ENCODE measurements at regions of chr7 and their contacts with region 1.

Region 1: DNA sequence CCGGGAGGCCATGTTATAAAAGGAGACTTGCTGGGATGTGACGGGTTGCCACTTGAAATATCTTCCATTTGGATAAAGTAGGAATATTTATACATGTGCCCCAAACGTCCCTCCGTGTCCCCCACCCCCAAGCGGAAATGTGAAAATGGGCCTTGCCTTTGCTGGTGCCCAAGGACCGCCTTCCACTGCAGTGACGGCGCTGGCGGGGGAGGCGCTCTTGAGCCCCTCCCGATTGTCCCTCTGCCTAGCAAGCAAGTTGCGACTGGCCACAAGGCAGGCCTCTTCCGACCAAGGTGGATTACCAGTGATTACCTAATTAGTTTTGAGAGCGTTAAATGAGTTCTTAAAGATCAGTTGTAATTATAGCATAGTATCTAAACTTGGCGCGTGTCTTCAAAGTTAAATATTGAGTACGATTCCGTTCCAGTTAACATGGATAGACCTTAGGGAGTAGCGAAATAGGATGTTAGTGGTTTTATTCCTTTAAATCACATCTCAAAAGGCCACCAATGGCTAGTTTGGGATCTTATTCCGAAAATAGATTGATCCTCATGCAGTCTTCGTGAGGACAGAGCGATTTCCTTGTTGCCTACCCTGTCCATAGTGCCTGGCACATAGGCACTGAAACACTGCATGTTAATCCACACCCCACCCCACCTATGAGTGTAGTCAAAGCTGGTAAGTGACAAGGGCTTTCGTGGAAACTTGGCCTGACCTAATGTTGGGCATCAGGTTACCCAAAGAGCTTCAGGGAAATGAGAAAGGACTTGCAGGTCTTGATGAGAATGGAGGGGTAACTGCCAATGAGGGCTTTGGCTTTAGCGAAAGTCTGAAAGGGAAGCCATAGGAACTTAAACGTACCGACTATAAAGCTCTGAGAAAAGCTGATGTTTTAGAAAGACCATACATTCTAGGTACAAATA is 1.1 kb downstream of the PPIA start:
- DNase-seq: peak; percentile 81
- H3K4me3 Mint-ChIP-seq: peak overlapping the region; percentile 94
- H3K27ac Mint-ChIP-seq: peak overlapping the region; percentile 94
- H3K4me1 Mint-ChIP-seq: peaks cover 34% of the 10 kb centered on the region
- H3K27me3 Mint-ChIP-seq: no peaks in the 10 kb centered on the region

Region 2: DNA sequence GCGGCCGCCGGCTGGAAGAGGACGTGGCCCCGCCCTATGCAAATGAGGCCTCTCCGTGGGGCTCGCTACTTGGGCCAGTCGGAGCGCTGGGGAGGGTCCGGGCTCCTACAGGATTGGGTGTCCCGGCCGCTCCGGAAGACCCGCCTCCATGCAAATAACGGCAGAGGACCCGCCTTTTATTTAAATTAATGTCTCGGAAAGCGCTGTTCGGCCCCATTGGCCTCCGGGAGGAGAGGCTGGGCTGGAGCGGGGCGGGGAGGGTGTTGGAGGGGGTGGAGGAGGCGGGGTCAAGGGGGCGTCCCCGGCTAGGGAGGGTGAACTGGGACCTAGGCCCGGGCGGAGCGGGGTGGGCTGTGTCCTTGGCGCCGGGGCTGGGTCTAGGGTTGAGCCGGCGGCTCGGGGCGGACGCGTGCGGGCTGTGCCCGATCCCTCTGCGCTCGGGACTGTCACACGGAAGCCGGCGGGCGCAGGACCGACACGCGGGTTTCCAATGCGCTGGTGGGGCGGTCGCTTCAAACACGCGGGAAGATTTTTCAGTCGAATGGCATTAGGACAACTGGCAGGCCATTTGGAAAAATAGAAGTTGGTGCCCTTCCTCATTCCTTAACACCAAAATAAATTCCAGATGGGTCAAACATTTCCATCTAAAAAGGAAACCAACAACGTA is 714.9 kb before region 1 on chr7:
- intact Hi-C with region 1: loop called (anchors 1 kb)
- DNase-seq: peak; percentile 97
- H3K4me3 Mint-ChIP-seq: peak overlapping the region; percentile 90
- H3K27ac Mint-ChIP-seq: peak overlapping the region; percentile 84
- H3K4me1 Mint-ChIP-seq: peaks cover 28% of the 10 kb centered on the region
- H3K27me3 Mint-ChIP-seq: no peaks in the 10 kb centered on the region

Region 3: DNA sequence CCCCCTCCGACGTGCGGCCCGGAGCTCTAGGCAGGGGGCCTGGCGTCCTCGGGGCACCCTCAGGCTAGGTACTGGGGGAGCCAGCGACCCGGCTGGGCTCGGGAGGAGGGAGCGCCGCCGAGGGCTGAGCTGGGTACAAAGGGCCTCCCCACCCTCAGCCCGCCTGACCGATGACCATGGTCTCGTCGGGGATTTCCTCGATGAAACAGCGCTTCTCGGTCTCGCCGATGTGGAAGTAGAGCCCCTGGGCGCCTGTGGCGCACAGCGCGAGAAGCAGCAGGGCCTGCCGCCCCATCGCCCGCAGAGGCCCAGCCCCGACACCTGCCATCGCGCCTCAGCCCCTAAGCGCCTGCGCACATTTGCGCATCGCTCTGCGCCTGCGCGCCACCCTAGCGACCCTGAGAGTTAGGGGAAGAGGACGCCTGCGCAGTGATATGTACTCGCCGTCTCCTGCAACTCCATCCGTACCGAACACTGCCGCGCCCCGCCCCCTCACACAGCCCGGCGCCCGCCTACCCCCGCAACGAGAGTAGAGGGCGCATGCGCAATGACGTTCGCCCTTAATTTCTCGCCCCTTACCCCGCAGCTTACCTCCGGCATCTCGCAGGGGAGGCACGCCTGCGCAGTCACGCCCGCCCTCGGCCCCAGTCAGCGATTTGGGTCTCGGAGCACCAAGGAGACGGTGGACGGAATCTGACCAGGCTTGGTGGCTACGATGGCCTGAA is 215.5 kb before region 1 on chr7 and contains the start of gene TMED4:
- intact Hi-C with region 1: loop called (anchors 1 kb)
- DNase-seq: peak; percentile 100
- H3K4me3 Mint-ChIP-seq: peak within 1 kb of the TSS; percentile 93
- H3K27ac Mint-ChIP-seq: peak within 1 kb of the TSS; percentile 93
- H3K4me1 Mint-ChIP-seq: peaks cover 33% of the 10 kb centered on the region
- H3K27me3 Mint-ChIP-seq: no peaks in the 10 kb centered on the region
- total RNA-seq, gene TMED4: 74.9 and 79.6 TPM in 2 replicates

Region 4: DNA sequence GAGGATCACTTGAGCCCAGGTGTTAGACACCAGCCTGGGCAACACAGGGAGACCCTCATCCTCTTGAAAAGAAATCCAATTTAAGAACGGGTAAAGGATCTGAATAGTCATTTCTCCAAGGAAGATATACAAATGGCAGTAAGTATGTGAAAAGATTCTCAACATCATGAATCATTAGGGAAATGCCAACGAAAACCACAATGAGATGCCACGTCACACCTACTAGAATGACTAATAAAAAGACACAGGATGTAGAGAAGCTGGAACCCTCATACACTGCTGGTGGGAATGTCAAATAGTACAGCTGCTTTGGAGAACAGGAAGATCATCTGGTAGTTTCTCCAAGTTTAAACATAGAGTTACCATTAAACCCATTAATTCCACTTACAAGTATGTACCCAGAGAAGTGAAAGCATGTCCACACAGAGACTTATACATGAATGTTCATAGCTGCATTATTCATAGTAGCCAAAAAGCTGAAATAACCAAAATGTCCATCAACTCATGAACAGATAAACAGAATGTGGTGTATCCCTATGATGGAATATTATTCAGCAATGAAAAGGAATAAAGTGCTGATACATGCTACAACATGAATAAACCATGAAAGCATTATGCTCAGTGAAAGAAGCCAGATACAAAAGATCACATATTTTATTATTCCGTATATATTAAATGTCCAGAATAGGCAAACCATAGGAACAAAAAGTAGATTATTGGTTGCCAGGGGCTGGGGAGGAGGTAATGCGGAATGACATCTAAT is 62.0 kb before region 1 on chr7:
- intact Hi-C with region 1: loop called (anchors 1 kb)
- DNase-seq: peak; percentile 42
- H3K4me3 Mint-ChIP-seq: peak overlapping the region; percentile 50
- H3K27ac Mint-ChIP-seq: peak overlapping the region; percentile 89
- H3K4me1 Mint-ChIP-seq: peaks cover 29% of the 10 kb centered on the region
- H3K27me3 Mint-ChIP-seq: peaks cover 2% of the 10 kb centered on the region

Region 5: DNA sequence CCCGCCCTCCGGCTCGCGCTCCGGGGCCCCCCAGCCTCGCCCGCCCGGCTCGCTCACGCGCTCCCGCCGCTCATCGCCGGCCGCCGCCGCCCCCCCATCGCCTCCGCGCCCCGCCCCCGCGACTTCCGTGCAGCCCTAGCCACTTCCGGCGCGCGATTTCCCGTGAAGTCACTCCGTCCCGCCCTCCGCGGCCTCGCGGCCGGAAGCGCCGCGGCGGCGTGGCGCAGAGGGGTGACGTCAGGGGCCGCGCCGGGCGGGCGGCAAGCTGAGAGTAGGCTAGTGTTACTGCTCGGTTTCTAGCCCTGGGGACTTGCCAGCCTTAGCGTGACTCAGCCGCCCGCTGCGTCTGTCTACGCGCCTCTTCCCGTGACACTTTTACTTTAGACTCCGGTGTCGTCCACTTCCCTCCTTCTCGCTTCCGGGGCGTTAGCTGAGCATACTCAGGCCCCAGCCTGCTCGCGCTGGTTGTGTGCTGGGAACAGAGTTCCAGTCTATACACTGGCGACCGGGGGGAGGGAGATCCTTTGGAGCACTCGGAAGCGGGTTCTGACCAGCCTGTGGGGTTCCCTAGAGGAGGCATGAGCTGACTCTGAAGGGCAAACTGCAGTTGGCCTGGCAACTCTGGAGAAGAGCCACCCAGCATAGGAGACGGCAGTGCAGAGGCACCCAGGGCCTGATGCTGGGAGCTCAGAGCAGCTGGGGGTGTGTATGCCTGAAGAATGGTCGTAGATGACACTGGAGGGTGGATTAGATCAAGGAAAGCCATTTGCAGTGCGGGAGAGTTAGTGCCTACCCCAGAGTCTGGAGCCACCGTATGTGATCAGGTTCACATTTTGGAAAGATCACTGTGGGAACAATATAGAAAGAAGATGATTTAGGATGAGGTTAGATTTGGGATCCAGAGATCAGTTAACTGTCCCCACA is 88.1 kb after region 1 on chr7 and contains the start of gene PURB:
- intact Hi-C with region 1: loop called (anchors 1 kb)
- DNase-seq: peak; percentile 97
- H3K4me3 Mint-ChIP-seq: peak within 1 kb of the TSS; percentile 98
- H3K27ac Mint-ChIP-seq: peak within 1 kb of the TSS; percentile 100
- H3K4me1 Mint-ChIP-seq: peaks cover 67% of the 10 kb centered on the region
- H3K27me3 Mint-ChIP-seq: no peaks in the 10 kb centered on the region
- total RNA-seq, gene PURB: 42.1 and 42.6 TPM in 2 replicates

Region 6: DNA sequence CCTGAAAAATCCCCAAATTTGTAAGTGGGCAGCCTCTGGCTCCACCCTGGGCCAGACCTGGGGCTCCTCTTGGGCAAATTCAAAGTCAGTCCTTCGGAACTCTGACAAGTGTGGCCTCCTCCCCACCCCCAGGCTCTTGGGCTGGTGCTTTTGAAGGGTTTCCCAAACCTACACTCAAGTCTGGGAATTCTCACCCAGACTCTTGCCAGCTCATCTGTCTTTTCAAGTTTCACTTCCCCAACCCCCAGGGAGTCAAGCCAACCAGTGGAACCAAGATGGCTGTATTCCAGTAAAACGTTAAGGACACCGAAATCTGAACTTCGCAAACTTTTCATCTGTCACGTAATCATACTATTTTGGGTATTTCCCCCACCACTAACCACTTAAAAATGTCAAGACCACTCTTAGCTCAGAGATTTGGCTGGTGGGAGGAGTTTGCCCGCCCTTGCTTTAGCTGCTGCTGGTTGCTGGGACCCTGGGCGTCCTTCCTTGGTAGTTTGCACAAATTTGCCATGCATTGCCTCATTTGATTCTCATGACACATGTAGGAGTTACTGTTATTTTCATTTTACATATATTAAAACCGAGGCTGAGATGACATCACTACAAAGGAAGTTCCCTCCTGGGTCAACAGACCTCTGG is 182.9 kb after region 1 on chr7:
- intact Hi-C with region 1: loop called (anchors 2 kb)
- DNase-seq: peak; percentile 56
- H3K4me3 Mint-ChIP-seq: peak overlapping the region; percentile 98
- H3K27ac Mint-ChIP-seq: peak overlapping the region; percentile 98
- H3K4me1 Mint-ChIP-seq: peaks cover 78% of the 10 kb centered on the region
- H3K27me3 Mint-ChIP-seq: no peaks in the 10 kb centered on the region

Region 7: GRCh38 chr7:45224832-45225231 is 427.2 kb after region 1 on chr7:
- intact Hi-C with region 1: no loop called
- DNase-seq: no peak
- H3K4me3 Mint-ChIP-seq: no peak overlapping the region
- H3K27ac Mint-ChIP-seq: no peak overlapping the region
- H3K4me1 Mint-ChIP-seq: no peaks in the 10 kb centered on the region
- H3K27me3 Mint-ChIP-seq: peaks cover 22% of the 10 kb centered on the region

Region 8: DNA sequence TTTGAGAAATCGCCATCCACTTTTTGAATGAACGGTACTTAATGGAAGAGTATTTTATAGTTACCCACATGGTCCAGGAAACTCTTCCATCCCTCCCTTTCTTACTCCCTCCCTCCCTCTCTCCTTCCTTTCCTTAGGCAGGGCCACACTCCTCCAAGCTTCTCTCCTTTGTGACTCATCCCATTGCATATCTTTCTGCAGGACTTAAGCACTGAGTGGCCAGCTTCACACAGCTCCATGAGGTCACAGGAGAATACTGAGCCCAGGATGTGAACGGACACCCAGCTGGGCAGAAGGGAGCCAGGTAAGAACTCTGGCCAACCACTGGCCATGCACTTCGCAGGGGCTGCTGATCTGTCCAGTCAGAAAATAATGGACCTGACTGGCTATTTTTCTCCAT is 586.9 kb after region 1 on chr7:
- intact Hi-C with region 1: no loop called
- DNase-seq: no peak
- H3K4me3 Mint-ChIP-seq: no peak overlapping the region
- H3K27ac Mint-ChIP-seq: no peak overlapping the region
- H3K4me1 Mint-ChIP-seq: no peaks in the 10 kb centered on the region
- H3K27me3 Mint-ChIP-seq: peaks cover 2% of the 10 kb centered on the region